Aorta (tissue), 5 donors: ENCODE measurements at regions of chr6 and their contacts with region 1.

Region 1: GRCh38 chr6:35202066-35202546 is 11.7 kb upstream of the SCUBE3 start:
- DNase-seq: no peak
- ATAC-seq: no peak
- H3K4me3 ChIP-seq: no peak overlapping the region
- H3K27ac ChIP-seq: no peak overlapping the region
- H3K4me1 ChIP-seq: no peaks in the 10 kb centered on the region
- H3K27me3 ChIP-seq: no peaks in the 10 kb centered on the region

Region 2: DNA sequence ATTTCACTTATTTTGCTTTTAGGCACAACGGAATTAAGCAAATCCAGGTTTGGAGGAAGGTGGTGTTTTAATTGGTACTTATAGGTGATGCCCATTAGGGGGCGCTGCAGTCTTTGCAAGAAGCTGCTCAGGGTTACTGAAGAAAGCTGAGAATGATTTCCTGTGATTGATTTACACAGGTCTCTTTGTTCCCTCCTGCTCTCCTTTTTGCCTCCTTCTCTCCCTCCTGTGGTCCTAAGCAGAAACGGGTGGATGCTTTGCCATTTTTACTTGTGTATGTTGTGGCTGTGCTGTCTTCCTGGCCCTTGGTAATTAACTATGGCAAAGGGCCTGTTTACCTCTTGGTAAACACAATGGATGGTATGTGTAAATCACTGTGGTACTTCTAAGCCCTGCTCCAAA is 215.3 kb before region 1 on chr6:
- intact Hi-C with region 1: loop called in 1 of 2 experiments (anchors 10 kb)
- DNase-seq: peak; percentile 64 to 85
- ATAC-seq: peak; percentile 89
- H3K4me3 ChIP-seq: no peak overlapping the region
- H3K27ac ChIP-seq: peak overlapping the region in 1 of 2 donors; percentile 38
- H3K4me1 ChIP-seq: no peaks in the 10 kb centered on the region
- H3K27me3 ChIP-seq: no peaks in the 10 kb centered on the region

Region 3: DNA sequence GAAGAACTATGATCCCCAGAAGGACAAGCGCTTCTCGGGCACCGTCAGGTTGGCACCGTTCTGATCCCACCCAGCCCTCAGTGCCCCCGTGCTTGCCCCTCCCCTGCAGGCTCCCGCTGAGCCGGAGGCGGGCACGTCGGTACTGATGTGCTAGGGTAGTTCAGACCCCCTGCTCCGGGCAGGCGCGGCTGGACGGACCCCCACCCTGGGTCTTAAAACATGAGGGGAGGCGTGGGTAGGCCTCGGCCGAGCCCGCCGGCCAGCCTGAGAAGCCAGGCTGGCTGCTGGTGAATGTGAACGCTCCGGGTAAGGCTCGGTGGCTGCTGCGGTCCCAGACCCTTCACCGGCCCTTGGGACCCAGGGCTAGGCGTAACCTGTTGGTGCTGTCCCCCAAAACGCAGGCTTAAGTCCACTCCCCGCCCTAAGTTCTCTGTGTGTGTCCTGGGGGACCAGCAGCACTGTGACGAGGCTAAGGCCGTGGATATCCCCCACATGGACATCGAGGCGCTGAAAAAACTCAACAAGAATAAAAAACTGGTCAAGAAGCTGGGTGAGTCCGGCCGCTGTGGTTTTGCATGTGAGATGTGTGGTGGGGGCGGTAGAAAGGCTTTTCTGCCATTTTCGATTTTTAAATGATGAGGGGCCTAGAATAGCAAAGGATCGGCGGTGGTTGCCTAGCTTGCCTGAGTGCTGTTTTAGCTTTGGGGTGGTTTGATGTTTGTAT is 267.0 kb after region 1 on chr6:
- intact Hi-C with region 1: no loop called
- DNase-seq: no peak
- ATAC-seq: peak; percentile 37
- H3K4me3 ChIP-seq: peak overlapping the region; percentile 31 to 60
- H3K27ac ChIP-seq: peak overlapping the region in 1 of 2 donors; percentile 8
- H3K4me1 ChIP-seq: no peaks in the 10 kb centered on the region
- H3K27me3 ChIP-seq: no peaks in the 10 kb centered on the region